Ovary (tissue), 10 donors: ENCODE measurements at regions of chr18 and their contacts with region 1.

Region 1: DNA sequence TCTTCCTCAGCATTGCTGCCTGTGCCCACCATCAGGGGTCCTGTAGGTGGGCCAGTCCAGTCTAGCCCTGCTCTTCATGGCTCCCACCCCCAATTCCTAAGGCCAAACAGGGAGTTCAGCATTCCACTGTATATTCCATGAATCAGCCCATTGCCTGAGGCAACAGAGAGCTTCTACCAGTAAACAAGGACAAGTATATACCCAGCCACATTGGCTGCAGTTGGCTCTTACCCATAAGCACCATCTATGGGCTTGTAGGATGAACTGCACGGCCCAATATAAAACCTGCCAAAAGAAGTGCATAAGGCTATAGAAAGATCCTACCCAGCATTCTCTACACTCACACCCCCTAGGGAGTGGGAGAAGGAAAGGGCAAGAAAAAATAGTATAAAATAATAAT is 95.1 kb upstream of the SALL3 start:
- DNase-seq: no peak
- H3K4me3 ChIP-seq: no peak overlapping the region
- H3K27ac ChIP-seq: no peak overlapping the region
- H3K4me1 ChIP-seq: no peaks in the 10 kb centered on the region
- H3K27me3 ChIP-seq: no peaks in the 10 kb centered on the region
- CTCF ChIP-seq: no peak
- EP300 ChIP-seq: no peak
- POLR2A ChIP-seq: no peak

Region 2: DNA sequence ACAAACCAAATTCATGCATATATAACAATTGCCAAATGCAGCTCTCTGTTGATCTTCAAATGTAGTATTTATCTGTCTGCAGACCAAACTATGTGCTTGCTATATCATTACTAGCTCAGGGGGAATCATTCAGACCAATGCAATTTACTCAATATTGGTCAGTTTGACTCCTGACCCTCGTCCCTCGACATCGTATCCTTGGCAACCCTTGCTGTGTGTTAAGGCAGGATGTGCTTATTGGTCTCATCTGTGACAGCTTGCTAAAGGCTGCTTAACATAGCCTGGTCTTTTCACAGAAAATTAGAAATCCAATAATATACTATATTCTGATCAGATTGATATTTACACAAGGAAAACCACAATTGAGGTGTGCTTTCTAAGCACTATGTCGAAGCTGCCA is 887.8 kb before region 1 on chr18:
- intact Hi-C with region 1: no loop called
- DNase-seq: no peak
- H3K4me3 ChIP-seq: no peak overlapping the region
- H3K27ac ChIP-seq: no peak overlapping the region
- H3K4me1 ChIP-seq: no peaks in the 10 kb centered on the region
- H3K27me3 ChIP-seq: no peaks in the 10 kb centered on the region
- CTCF ChIP-seq: no peak
- EP300 ChIP-seq: no peak
- POLR2A ChIP-seq: no peak

Region 3: DNA sequence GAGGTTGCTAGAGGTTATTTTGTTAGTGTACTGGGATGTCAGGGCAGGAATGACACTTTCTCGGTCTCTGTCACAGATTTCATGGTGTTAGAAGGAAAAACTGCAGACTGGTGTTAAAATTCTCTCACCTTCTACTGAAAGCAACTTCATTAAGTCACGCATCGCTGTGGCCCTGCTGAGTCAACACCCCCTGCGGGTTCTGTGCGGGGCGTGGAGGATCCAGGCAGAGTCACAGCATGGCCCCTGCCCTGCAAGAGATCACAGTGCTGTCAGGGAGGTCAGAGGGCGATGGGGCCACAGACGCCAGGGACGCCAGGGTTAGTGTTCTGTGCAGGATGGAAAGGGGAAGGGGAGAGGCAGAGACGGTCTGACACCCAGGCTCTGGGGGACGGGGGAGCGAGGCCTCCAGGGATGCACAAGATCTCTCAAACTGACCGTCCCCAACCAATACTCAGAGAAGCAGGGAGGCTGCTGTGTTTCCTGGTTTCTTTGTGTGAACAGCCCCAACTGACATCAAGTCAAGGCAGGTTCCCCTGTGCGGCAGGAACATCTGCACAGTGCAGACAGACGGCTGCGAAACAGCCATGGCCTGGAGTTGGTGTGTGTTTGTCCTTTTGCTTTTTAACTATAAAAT is 259.7 kb before region 1 on chr18:
- intact Hi-C with region 1: no loop called
- DNase-seq: no peak
- H3K4me3 ChIP-seq: no peak overlapping the region
- H3K27ac ChIP-seq: no peak overlapping the region
- H3K4me1 ChIP-seq: no peaks in the 10 kb centered on the region
- H3K27me3 ChIP-seq: no peaks in the 10 kb centered on the region
- CTCF ChIP-seq: no peak
- EP300 ChIP-seq: no peak
- POLR2A ChIP-seq: no peak

Region 4: DNA sequence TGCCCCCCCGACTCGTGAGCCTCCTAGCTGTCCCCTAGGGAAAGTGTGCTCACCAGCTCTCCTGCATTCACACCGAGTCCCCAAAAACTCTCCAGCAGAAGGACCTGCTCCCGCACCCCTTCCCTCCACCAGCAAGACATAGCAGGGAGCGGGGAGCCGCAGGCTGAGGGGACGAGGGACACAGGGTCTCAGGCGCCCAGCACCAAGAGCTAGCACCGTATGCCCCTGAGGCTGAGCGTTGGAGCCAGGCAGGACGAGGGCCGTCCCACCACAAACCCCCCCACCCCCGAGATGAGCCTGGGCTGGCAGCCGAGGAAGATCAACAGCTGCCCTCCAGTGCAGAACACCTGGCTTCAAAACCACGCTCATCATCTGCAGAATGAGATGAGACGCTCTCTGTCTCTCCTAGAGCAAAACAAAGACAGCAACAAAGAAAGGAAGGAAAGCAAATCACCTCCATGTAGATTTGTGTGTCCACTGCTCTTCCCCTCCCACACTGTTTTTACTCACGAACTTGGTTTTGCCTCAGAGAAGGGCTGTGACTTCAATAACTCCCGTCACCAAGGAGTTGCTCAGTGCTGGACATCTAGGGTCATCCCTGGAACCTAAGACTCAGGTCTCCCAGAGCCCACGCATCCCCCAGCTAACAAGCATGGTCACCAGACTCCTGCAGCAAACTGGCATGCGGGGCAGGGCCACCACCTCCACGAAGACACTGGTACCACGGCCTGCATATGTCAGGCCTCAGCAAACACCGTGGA is 55.4 kb after region 1 on chr18:
- intact Hi-C with region 1: loop called in 1 of 4 experiments (anchors 10 kb)
- DNase-seq: no peak
- H3K4me3 ChIP-seq: no peak overlapping the region
- H3K27ac ChIP-seq: no peak overlapping the region
- H3K4me1 ChIP-seq: no peaks in the 10 kb centered on the region
- H3K27me3 ChIP-seq: no peaks in the 10 kb centered on the region
- CTCF ChIP-seq: no peak
- EP300 ChIP-seq: no peak
- POLR2A ChIP-seq: no peak